GM10248 (cell line): ENCODE measurements at regions of chr1 and their contacts with region 1.

Region 1: GRCh38 chr1:116574581-116575291 is 3.9 kb upstream of the CD58 start:
- DNase-seq: peak; percentile 76
- CTCF ChIP-seq: peak; percentile 88

Region 2: GRCh38 chr1:116534012-116534739 is 40.6 kb before region 1 on chr1:
- CTCF ChIA-PET with region 1: no interaction called
- POLR2A ChIA-PET with region 1: no interaction called
- DNase-seq: no peak
- CTCF ChIP-seq: no peak

Region 3: DNA sequence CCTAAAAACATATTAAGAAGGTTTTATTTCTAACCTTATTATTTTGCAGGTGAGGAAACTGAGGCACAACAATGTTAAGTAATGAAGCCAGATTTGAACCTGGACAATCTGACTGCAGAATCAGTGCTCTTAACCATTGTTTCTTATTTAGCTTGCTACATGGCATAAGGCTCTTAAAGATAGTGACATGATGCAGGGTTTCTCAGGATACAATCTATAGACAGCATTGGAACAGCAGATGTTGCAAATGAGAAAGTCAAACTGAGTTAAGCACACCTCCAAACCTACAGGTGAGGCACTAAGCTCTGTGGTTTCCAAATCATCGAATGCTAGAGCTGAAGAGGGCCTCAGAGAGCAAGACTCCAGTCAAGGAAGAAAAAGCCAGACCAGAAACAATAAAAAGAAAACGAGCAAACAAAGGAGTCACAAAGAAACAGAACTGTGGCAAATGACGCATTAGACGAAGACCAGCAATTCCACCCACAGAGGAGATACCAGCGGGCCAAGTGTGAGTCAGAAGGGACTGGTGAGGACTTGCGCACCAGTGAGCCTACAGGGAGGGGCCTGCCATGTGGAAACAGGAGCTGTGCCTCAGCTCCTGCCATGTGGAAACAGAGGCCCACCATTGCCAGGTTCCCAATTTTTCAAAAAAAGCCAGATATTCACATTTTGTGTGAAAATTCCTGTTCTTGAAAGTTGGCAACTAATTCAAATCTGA is 18.3 kb before region 1 on chr1:
- CTCF ChIA-PET with region 1: interaction called, 7 read pairs
- POLR2A ChIA-PET with region 1: interaction called, 18 read pairs
- DNase-seq: no peak
- CTCF ChIP-seq: peak; percentile 23

Region 4: GRCh38 chr1:116586741-116587143 is 12.0 kb after region 1 on chr1:
- CTCF ChIA-PET with region 1: interaction called, 55 read pairs
- POLR2A ChIA-PET with region 1: no interaction called
- DNase-seq: no peak
- CTCF ChIP-seq: no peak

Region 5: GRCh38 chr1:116667575-116668105 is 92.9 kb after region 1 on chr1 and contains the start of gene IGSF3:
- CTCF ChIA-PET with region 1: interaction called, 48 read pairs
- POLR2A ChIA-PET with region 1: no interaction called
- DNase-seq: peak; percentile 81
- CTCF ChIP-seq: no peak

Region 6: DNA sequence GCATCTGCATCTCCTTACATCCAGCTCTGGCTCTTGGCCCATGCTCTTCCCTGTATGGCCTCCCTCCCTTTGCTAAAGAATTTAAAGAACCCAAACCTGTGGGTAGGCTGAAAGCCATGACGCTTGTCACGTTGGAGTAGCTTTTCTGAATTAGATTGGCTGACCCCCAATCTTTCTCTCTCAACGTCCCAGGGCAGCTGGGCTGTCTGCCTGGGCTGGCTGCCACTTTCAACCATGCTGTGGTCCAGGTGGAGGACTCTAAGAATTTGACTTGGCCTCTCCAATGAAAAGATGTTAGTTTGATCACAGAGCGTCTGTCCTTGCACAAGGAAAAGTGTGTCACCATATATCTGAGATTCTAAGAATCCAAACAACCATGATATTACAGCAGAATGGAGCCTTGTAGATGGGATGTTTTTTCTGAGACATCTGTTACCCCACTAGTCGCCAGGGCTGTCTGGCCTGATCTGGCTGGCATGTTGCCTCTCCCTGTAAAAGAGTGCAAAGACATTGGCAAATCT is 99.3 kb after region 1 on chr1:
- CTCF ChIA-PET with region 1: interaction called, 48 read pairs
- POLR2A ChIA-PET with region 1: no interaction called
- DNase-seq: no peak
- CTCF ChIP-seq: no peak

Region 7: DNA sequence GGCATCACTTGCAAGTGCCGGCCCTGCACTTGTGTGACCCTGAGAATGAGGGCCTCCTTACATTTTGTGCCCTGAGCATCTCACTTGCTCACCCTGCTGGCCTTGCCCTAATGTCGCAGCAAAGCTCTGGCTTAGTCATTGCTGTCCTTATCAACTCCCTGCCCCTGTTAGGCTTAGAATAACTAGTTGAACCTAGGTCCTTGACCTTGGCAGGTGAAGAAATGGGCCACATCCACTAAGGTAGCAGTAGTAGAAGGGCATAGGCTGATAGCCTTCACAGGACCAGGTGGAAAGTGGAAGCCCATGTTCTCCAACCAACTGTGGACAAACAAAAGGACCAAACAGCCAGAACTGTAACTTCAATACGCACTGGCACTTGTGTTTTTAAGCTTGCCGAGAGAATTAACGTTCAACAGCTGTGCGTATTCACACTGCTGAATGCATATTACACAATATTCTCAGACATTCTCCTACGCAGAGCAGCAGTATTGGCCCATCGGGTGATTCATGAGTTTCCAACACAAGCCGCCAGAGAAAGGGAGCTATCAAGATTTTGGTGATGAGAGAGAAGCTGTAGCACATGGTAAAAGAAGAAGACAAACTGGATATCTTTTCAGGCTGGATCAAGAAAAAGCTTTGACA is 307.3 kb after region 1 on chr1:
- CTCF ChIA-PET with region 1: interaction called, 14 read pairs
- POLR2A ChIA-PET with region 1: no interaction called
- DNase-seq: peak; percentile 44
- CTCF ChIP-seq: peak; percentile 49

Region 8: DNA sequence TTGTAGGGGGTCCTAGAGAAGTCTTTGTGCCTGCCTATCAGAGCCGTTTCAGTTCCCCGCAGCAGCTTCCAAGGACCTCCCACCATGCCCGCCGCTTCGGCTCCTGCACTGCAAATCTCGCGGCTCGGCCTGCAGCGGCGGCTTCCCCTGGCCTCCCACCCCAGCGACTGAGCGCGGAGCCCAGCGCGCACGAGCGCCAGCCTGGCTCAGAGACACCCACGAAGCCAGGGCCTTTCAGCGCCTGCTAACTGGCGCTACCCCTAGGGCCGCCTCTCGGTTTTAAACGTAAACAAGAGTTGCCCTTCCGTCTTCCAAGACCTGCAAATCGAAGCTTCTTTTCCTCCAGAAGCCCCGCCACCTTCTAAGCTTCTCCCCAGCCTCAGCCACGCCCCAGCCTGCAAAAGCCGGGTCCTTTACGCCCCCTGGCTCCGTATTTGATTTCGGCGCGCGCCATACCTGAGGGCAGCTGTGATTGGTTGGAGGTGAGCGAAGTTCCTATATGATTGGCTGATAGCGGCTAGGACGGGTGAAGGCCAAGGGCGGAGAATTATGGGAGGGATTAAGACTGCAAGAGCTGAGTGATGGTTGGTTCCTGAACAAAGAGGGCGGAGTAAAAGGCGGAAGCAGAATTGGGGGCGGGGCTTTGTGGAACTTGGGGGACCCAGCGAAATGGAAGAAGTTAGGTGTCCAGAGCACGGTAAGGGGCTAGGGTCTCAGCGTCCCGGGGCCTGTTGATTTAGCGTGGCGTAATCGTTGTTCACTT is 485.1 kb after region 1 on chr1 and contains the start of gene TTF2:
- CTCF ChIA-PET with region 1: interaction called, 13 read pairs
- POLR2A ChIA-PET with region 1: no interaction called
- DNase-seq: peak; percentile 96
- CTCF ChIP-seq: no peak